ENCODE measurements at regions of chr5 and their contacts with region 1.

Region 1: DNA sequence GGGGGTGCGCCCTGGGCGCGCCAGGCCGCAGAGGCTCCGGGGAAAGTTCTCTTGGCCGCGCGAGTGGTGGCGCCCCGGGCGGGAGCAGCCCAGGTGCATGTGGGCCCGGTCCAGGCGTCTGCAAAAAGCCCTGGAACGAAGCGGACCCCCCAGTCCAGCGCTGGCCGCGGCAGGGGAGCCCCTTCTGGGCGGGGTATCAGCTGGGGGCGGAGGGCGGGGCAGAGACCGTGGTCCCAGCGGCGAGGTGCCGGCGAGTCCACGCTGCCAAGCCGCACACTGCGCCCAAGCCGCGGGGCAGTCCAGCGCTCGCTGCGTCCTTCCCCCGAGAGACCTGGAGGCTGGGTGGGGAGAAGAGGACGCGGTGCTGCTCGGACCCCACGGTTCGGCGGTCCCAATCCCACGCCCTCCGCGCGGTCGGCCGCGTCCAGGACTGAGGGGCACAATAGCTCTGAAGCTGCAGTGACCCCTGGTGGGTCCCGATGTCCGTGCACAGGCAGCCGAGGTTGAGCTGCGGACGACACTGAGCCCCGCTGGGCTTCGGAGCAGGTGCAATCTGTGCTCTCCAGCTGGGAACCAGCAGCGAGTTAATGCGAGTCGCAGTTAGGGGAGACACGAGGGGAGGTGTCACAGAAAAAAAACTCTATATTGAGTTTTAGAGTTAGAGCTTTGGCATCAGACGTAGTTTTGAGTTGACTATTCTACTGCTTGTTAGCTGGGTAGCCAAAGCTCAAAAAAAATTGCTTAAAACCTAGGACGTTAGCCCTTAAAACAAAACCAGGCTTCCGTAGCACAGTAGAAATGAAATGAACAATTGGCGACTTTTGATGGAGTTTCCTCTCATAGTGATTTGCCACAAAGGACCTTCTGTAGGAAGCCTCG is 1.1 kb upstream of the EPB41L4A start:
- DNase-seq: peak; percentile 42 to 65
- ATAC-seq: peak; percentile 73 to 84 (median 82)
- H3K4me3 ChIP-seq: peak overlapping the region; percentile 81
- H3K4me3 Mint-ChIP-seq: peak overlapping the region; percentile 89
- H3K27ac ChIP-seq: no peak overlapping the region
- H3K27ac Mint-ChIP-seq: peak overlapping the region in 1 of 2 donors; percentile 92
- H3K4me1 ChIP-seq: peaks cover 16% of the 10 kb centered on the region
- H3K4me1 Mint-ChIP-seq: peaks cover 10 to 20% of the 10 kb centered on the region in 2 donors
- H3K27me3 ChIP-seq: peaks cover 6% of the 10 kb centered on the region
- H3K27me3 Mint-ChIP-seq: peaks cover 11 to 22% of the 10 kb centered on the region in 2 donors
- CTCF ChIP-seq: peak; percentile 66

Region 2: GRCh38 chr5:112210430-112211005 is 209.7 kb before region 1 on chr5:
- intact Hi-C with region 1: loop called (anchors 1 kb)
- DNase-seq: peak in 1 of 2 donors; percentile 20
- ATAC-seq: peak in 1 of 3 donors; percentile 42
- H3K4me3 ChIP-seq: no peak overlapping the region
- H3K4me3 Mint-ChIP-seq: no peak overlapping the region
- H3K27ac ChIP-seq: no peak overlapping the region
- H3K27ac Mint-ChIP-seq: no peak overlapping the region
- H3K4me1 ChIP-seq: no peaks in the 10 kb centered on the region
- H3K4me1 Mint-ChIP-seq: peaks cover 0 to 4% of the 10 kb centered on the region in 2 donors
- H3K27me3 ChIP-seq: no peaks in the 10 kb centered on the region
- H3K27me3 Mint-ChIP-seq: peaks cover 0 to 16% of the 10 kb centered on the region in 2 donors
- CTCF ChIP-seq: peak; percentile 50

Region 3: DNA sequence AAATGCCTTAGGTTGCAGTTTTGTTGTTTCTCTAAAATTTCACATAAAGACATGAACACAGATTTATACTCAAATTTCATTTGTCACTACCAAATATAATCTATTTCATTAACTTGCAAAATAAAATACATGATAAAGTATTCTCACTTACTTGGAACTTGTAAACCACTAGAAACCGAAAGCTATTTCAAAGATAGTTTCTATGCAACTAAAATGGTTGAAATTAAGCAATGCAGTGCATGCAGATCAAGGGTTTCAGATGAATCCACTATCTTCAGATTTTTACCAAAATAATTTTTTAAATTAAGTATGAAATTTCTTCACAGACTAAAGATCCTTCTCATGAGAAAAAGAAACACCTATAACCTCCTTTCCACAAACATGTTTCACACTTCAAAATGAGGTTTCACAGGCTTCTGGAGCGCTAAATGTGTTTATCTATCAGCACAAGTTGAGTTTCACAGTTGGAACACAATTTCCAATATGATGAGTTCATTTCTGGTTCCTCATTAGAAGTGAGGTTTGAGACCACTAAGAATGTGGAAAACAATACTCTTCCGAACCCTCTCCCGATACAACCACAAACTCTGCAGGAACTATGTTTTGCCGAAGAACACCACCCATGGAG is 65.1 kb before region 1 on chr5:
- intact Hi-C with region 1: loop called (anchors 5 kb)
- DNase-seq: no peak
- ATAC-seq: peak; percentile 57 to 76 (median 68)
- H3K4me3 ChIP-seq: no peak overlapping the region
- H3K4me3 Mint-ChIP-seq: peak overlapping the region; percentile 78
- H3K27ac ChIP-seq: peak overlapping the region; percentile 45
- H3K27ac Mint-ChIP-seq: peak overlapping the region; percentile 67 to 85
- H3K4me1 ChIP-seq: peaks cover 5% of the 10 kb centered on the region
- H3K4me1 Mint-ChIP-seq: peaks cover 37 to 50% of the 10 kb centered on the region in 2 donors
- H3K27me3 ChIP-seq: no peaks in the 10 kb centered on the region
- H3K27me3 Mint-ChIP-seq: no peaks in the 10 kb centered on the region
- CTCF ChIP-seq: no peak

Region 4: GRCh38 chr5:112479407-112479806 is 59.2 kb after region 1 on chr5:
- intact Hi-C with region 1: no loop called
- DNase-seq: no peak
- ATAC-seq: no peak
- H3K4me3 ChIP-seq: no peak overlapping the region
- H3K4me3 Mint-ChIP-seq: no peak overlapping the region
- H3K27ac ChIP-seq: no peak overlapping the region
- H3K27ac Mint-ChIP-seq: no peak overlapping the region
- H3K4me1 ChIP-seq: no peaks in the 10 kb centered on the region
- H3K4me1 Mint-ChIP-seq: no peaks in the 10 kb centered on the region
- H3K27me3 ChIP-seq: no peaks in the 10 kb centered on the region
- H3K27me3 Mint-ChIP-seq: peaks cover 7 to 14% of the 10 kb centered on the region in 2 donors
- CTCF ChIP-seq: no peak

Region 5: GRCh38 chr5:112738191-112738560 is 318.0 kb after region 1 on chr5:
- intact Hi-C with region 1: no loop called
- DNase-seq: peak in 1 of 2 donors; percentile 20
- ATAC-seq: peak; percentile 5 to 11 (median 7)
- H3K4me3 ChIP-seq: peak overlapping the region; percentile 59
- H3K4me3 Mint-ChIP-seq: peak overlapping the region; percentile 98
- H3K27ac ChIP-seq: peak overlapping the region; percentile 24
- H3K27ac Mint-ChIP-seq: peak overlapping the region; percentile 53 to 93
- H3K4me1 ChIP-seq: peaks cover 8% of the 10 kb centered on the region
- H3K4me1 Mint-ChIP-seq: peaks cover 35% of the 10 kb centered on the region in 2 donors
- H3K27me3 ChIP-seq: no peaks in the 10 kb centered on the region
- H3K27me3 Mint-ChIP-seq: no peaks in the 10 kb centered on the region
- CTCF ChIP-seq: no peak